ENCODE measurements at regions of chr9 and their contacts with region 1.

Region 1: DNA sequence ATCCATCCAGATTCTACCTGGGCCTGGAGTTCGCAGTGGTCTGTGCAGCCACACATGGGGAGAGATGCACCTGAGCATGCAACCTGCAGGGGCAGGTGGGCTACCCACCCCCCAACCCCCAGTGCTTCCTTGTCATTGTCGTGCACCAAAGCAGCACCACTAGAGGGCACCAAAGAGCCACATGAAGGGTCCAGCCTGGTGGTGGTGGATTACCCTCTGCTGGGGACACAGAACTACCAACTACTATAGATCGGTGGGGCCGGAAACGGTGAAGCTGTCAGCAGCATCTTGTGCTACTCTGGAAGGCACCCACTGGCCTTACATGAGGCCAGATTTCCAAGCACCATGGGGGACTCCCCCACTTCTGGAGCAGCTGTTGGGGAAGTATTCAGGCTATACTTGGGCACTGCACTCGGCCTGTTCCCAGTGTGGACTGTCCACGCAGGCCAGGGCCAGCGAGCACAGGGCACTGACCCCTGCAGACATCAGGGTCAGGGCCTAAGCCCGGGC is 60.2 kb upstream of the TBC1D2 start:
- DNase-seq: peak; percentile 89

Region 2: DNA sequence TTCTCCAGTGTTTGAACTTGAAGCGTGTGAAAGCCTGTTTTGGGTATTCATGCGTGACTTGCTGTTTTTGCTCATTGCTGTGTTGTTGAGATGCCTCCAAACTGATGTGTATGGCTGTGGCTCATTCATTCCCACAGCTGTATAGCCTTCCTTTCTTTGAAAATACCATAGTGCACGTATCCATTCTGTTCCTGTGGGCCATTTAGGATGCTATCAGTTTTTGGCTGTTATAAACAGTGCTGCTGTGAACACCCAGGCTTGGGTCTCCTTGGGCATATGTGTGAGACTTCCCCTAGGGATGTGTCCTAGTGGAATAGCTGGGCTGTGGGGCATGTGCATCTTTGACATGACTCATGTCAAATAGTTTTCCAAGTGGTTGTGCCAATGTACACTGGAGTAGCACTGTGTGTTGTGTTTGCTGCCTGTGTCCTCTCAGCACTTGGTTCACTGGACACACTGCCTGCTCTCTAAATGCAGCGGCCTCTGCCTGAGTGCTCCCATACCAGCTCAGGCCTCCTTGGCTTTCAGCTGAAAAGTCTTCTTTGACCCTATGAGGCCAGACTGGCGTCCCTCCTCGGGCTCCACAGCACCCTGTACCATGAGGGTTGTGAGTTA is 42.4 kb after region 1 on chr9:
- intact Hi-C with region 1: no loop called
- DNase-seq: no peak

Region 3: GRCh38 chr9:98607787-98608186 is 292.2 kb after region 1 on chr9:
- intact Hi-C with region 1: no loop called
- DNase-seq: no peak

Region 4: GRCh38 chr9:98775831-98776441 is 460.3 kb after region 1 on chr9:
- intact Hi-C with region 1: loop called (anchors 5 kb)
- DNase-seq: no peak

Region 5: DNA sequence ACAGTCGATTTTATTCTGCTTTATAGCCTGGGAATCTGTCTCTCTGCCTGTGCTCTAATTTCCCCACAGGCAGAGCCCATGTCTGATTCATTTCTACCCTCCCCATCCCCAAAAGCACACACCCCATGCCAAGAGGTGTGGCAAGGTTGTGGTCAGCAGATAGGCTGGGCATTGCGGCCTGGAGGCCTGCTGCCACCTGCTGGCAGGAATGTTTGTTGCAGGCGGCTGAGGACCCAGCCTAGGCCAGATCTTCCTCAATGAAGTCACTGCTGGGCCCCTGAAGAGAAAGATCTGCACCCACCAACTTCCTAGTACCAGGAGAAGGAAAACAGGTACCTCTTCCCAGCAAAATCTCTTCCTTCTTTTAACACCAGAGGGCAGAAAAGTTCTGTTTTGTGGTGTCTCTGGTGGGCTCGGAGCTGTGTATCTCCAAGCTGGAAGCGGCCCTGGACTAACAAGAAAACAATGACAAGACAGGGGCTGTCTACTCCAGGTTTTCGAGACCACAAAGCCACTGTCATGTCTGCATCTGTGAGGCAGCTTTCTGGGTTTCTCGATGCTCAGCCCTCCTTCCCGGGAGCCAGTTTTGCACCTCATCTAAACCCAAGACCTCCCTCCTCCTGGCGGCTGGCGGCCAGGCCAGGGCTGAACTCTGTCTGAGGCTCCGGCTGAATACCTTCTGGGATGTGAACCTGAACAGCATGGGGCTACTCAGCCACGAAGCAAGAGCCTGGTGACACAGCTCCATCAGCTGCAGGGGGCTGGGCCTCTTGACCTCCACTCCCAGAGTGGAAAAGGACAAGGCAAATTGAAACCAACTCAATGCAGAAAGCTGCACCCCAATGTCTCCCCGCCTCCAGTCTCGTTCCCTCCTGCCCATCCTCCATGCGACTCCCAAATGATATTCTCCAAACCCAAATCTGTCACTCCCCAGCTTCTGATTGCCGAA is 475.8 kb after region 1 on chr9:
- intact Hi-C with region 1: loop called in 1 of 2 experiments (anchors 5 kb)
- DNase-seq: peak; percentile 95

Region 6: DNA sequence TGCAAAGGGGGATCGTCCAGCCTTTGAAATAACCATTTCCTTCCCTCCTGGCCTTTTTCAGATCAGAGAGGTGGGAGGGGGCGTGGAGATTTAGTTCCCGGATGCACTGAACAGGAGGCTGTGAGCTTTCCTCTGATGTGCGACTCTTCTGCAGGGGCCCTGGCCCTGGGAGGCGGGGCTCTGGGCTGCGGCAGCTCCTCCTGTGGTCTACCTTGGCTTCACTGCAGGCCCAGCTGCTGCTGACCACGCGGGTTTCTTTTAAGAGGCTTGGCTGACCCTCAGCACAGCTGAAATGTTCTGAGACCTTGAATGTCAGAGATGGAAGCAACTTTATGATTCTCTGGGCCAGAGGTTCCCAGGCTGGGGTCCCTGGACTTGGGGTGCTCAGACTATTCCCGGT is 601.1 kb after region 1 on chr9:
- intact Hi-C with region 1: no loop called
- DNase-seq: no peak